ENCODE measurements at regions of chr1 and their contacts with region 1.

Region 1: DNA sequence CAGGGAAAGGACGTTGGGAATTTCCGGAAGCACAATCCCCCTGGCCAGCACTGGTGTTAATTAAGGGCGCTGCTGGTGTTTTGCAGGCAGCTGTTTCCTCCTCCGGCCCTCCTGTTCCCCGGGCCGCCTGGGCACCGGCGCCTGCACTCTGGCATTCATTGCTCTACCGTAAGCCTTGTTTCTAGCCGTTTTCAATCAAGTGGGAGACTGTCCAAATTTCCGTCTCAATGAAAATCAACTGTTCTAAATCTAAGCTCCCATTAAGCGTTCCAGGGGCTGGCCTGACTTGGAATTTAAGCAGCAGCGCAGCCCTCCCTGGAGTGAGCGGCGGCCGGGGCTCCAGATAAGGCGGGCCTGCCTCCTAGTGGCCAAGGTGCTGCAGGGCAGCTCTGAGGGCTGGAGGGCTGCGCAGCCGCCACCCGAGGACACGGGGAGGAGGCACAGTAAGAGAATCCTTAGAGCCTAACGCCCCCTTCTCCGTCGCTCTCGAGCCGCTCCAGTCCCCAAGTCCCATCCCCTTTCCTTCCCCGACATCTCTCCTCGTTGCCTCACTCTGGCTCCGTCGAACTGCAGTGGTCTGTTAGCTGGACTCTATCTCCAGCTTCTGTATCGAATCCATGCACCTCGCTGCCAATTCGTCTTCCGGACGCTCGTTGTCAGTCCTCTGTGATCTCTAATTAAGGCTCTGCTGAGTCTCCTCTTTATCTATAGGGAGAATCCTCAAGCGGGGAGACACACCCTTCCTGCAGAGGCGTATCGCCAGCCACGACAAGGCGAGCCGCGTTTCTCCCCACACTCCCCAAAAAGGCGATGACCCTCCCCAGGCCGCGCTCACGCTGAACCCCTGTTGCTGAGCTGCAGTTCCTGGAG is 57.8 kb upstream of the LRRC8D start:
- DNase-seq: peak; percentile 48
- ATAC-seq: peak; percentile 100
- H3K4me3 ChIP-seq: peak overlapping the region; percentile 48 to 84
- H3K27ac ChIP-seq: peak overlapping the region; percentile 36; the same call in 1 of the 2 replicates
- H3K4me1 ChIP-seq: peaks cover 5% of the 10 kb centered on the region
- H3K27me3 ChIP-seq: peaks cover 3% of the 10 kb centered on the region; the same call in 1 of the 2 replicates
- CTCF ChIP-seq: peak; percentile 100

Region 2: GRCh38 chr1:89483010-89483756 is 279.8 kb before region 1 on chr1:
- CTCF ChIA-PET with region 1: interaction called, 16 read pairs
- POLR2A ChIA-PET with region 1: no interaction called
- in situ Hi-C with region 1: no loop called
- intact Hi-C with region 1: loop called (anchors 1 kb)
- DNase-seq: peak; percentile 69
- ATAC-seq: peak; percentile 98
- H3K4me3 ChIP-seq: no peak overlapping the region
- H3K27ac ChIP-seq: no peak overlapping the region
- H3K4me1 ChIP-seq: no peaks in the 10 kb centered on the region
- H3K27me3 ChIP-seq: peaks cover 8% of the 10 kb centered on the region; the same call in 1 of the 2 replicates
- CTCF ChIP-seq: peak; percentile 88

Region 3: GRCh38 chr1:89736937-89737733 is 25.9 kb before region 1 on chr1:
- CTCF ChIA-PET with region 1: no interaction called
- POLR2A ChIA-PET with region 1: no interaction called
- in situ Hi-C with region 1: no loop called
- intact Hi-C with region 1: no loop called
- DNase-seq: no peak
- ATAC-seq: no peak
- H3K4me3 ChIP-seq: no peak overlapping the region
- H3K27ac ChIP-seq: no peak overlapping the region
- H3K4me1 ChIP-seq: no peaks in the 10 kb centered on the region
- H3K27me3 ChIP-seq: no peaks in the 10 kb centered on the region; the same call in 1 of the 2 replicates
- CTCF ChIP-seq: no peak

Region 4: DNA sequence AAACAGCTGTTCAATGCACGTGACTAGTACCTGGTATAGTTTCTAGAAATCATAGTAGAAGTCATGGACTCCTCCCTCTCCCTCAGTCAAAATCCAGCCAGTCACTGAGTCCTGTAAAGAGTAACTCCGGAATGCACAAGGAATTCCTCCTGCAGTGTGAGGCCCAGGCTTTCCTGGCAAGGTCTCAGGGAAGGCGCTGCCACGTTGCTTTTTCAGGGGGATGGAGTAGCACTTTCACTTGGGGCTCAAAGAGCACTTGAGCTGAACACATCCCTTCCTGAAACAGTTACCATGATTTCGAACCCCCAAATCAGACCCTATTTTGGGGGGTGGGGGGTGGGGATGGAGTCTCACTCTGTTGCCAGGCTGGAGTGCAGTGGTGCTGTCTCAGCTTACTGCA is 31.4 kb after region 1 on chr1:
- CTCF ChIA-PET with region 1: no interaction called
- POLR2A ChIA-PET with region 1: no interaction called
- in situ Hi-C with region 1: no loop called
- intact Hi-C with region 1: no loop called
- DNase-seq: no peak
- ATAC-seq: peak; percentile 60; the same call in 1 of the 2 replicates
- H3K4me3 ChIP-seq: no peak overlapping the region
- H3K27ac ChIP-seq: no peak overlapping the region
- H3K4me1 ChIP-seq: no peaks in the 10 kb centered on the region
- H3K27me3 ChIP-seq: no peaks in the 10 kb centered on the region
- CTCF ChIP-seq: no peak

Measured in Panc1 (cell line).